Mammary epithelial cell (primary cell): ENCODE measurements at regions of chr14 and their contacts with region 1.

Region 1: DNA sequence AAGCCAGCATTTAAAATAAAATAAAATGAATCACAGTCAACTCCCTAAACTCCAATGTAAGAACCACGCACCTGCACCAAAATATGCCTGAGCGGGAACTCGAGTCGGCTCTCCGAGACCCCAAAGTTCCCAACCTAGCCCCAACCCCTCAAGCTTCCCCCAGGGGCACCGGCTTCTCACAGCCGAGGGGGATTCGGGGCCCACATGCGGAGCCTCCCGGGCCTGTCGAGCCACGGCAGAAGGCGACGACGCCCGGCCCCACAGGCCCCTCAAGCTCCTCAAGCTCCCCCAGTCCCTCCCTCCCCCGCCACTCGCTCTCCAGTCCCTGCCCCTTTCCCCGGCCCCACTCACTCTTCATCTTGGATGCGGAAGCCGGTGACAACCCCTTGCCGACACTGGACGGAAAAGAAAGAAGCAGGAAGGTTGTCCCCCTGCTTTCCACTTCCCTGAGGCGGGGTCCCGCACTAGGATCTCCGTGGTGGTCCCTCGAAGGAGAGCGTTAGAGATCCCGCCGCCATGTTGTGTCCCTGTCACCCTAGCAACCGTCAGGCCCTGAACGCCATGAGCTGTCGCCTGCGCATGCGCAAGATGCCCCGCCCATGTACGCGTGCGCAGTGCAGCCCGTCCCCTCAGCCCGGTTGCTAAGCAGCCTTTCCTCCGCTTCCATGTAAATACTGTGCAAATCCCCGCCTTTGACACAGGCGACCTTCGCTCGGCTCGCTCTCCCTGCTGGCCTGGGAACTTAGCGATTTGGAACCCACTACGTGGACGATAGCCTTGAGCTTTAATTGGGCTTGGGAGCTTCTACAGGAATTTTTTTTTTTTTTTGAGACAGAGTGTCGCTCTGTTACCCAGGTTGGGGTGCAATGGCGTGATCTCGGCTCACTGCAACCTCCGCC is at the start of gene MOK:
- DNase-seq: peak; percentile 94
- H3K4me3 ChIP-seq: peak within 1 kb of the TSS; percentile 68 to 82 (median 77)
- H3K27ac ChIP-seq: peak within 1 kb of the TSS; percentile 86
- H3K4me1 ChIP-seq: no peaks in the 10 kb centered on the region
- H3K27me3 ChIP-seq: no peaks in the 10 kb centered on the region
- CTCF ChIP-seq: no peak
- total RNA-seq, gene MOK: 41.6 to 49.0 TPM

Region 2: DNA sequence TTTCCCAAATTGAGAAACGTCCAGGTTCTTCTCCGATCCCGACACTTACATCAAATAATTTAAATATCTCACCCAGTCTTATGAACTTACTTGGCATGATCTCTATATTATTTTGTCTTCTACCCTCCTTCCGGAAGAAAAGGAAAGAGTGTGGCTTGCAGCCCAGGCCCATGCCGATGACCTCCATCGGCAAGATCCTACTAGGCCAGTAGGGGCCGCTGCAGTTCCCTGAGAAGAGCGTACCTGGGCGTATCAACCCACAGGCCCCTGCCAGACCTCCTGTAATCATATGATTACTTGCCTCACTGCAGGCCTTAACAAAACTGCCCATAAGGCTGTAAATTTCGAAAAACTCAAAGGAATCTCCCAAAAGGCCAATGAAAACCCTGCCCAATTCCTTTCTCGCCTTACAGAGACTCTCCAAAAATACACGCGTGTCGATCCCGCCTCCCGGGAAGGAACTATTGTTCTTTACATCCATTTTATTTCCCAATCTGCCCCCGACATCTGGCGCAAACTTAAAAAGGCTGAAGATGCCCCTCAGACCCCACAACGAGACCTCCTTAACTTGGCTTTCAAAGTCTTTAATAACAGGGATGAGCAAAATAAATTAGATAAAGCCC is 69.5 kb before region 1 on chr14:
- CTCF ChIA-PET with region 1: no interaction called
- dilution Hi-C with region 1: loop called (anchors 5 kb)
- in situ Hi-C with region 1: loop called in 1 of 2 experiments (anchors 5 kb)
- intact Hi-C with region 1: loop called (anchors 2 kb)
- DNase-seq: peak; percentile 64
- H3K4me3 ChIP-seq: no peak overlapping the region
- H3K27ac ChIP-seq: no peak overlapping the region
- H3K4me1 ChIP-seq: peaks cover 9% of the 10 kb centered on the region
- H3K27me3 ChIP-seq: no peaks in the 10 kb centered on the region
- CTCF ChIP-seq: peak; percentile 69 to 93

Region 3: DNA sequence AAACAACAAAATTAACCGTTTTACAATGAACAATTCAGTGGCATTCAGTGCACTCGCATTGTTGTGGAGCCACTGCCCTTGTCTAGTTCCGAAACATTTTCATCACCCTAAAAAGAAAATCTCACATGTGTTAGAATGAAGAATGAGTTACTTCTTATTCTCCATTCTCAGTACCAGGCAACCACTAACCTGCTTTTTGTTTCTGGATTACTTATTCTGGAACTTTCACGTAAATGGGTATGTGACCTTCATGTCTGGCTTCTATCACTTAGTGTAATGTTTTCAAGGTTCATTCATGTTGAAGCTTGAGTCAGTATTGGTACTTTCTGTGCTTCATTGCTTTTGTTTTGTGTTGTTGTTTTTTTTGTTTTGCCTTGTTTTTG is 303.2 kb after region 1 on chr14:
- CTCF ChIA-PET with region 1: no interaction called
- dilution Hi-C with region 1: no loop called
- in situ Hi-C with region 1: no loop called
- intact Hi-C with region 1: no loop called
- DNase-seq: no peak
- H3K4me3 ChIP-seq: no peak overlapping the region
- H3K27ac ChIP-seq: no peak overlapping the region
- H3K4me1 ChIP-seq: peaks cover 19% of the 10 kb centered on the region
- H3K27me3 ChIP-seq: no peaks in the 10 kb centered on the region
- CTCF ChIP-seq: no peak